Aorta (tissue), 5 donors: ENCODE measurements at regions of chr7 and their contacts with region 1.

Region 1: DNA sequence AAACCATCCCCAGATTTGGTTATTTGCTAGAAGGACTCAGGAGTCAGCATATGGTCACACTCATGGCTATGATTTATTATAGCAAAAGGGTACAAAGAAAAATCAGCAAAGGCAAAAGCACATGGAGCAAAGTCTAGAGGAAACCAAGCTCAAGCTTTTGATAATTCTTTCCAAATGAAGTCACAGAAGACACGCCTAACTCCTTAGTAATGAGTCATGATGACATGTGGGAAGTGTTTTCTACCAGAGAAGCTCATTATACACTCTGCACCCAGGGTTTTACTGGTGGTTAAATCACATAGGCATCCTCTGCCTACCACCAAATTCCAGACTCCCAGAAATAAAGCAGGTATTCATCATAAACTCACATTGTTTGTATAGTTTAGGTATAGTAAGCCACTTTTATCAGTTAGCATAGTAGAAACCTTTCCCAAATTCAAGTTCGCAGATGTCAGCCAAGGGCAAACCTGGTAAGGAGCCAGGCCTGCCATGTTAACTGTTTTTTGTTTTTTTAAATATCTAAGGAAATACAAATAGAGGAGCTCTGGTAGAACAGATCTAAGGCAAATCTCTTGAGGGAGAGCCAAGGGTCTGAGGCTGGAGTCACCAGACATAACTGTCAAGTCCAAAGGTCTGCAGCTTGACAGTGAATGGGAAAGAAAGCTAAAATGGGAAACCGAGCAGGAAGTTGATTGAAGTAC is 15.4 kb upstream of the HIBADH start:
- DNase-seq: no peak
- ATAC-seq: peak; percentile 89
- H3K4me3 ChIP-seq: no peak overlapping the region
- H3K27ac ChIP-seq: peak overlapping the region; percentile 93 to 96
- H3K4me1 ChIP-seq: peaks cover 0 to 8% of the 10 kb centered on the region in 2 donors
- H3K27me3 ChIP-seq: no peaks in the 10 kb centered on the region

Region 2: GRCh38 chr7:27615420-27616185 is 62.5 kb before region 1 on chr7:
- intact Hi-C with region 1: loop called in 1 of 2 experiments (anchors 2 kb)
- DNase-seq: no peak
- ATAC-seq: no peak
- H3K4me3 ChIP-seq: no peak overlapping the region
- H3K27ac ChIP-seq: no peak overlapping the region
- H3K4me1 ChIP-seq: no peaks in the 10 kb centered on the region
- H3K27me3 ChIP-seq: no peaks in the 10 kb centered on the region